A549 (cell line): ENCODE measurements at regions of chr16 and their contacts with region 1.

Region 1: GRCh38 chr16:9159839-9160550 is 68.6 kb downstream of the HAPSTR1 start:
- DNase-seq: peak; percentile 62 to 83
- ATAC-seq: peak; percentile 99
- H3K4me3 ChIP-seq: no peak overlapping the region
- H3K27ac ChIP-seq: no peak overlapping the region
- H3K4me1 ChIP-seq: no peaks in the 10 kb centered on the region
- CTCF ChIP-seq: peak; percentile 74
- EP300 ChIP-seq: no peak
- POLR2A ChIP-seq: no peak
- RAD21 ChIP-seq: peak; percentile 87 to 92

Region 2: GRCh38 chr16:9102379-9102778 is 57.6 kb before region 1 on chr16:
- CTCF ChIA-PET with region 1: no interaction called
- POLR2A ChIA-PET with region 1: no interaction called
- DNase-seq: peak in 1 of 2 experiments; percentile 37
- ATAC-seq: 0 out of 6 replicates have a peak, but pooled peaks of 1 of the 2 experiments have one; percentile 14
- H3K4me3 ChIP-seq: no peak overlapping the region
- H3K27ac ChIP-seq: no peak overlapping the region
- H3K4me1 ChIP-seq: peaks cover 59% of the 10 kb centered on the region
- CTCF ChIP-seq: no peak
- EP300 ChIP-seq: no peak
- POLR2A ChIP-seq: no peak
- RAD21 ChIP-seq: no peak

Region 3: GRCh38 chr16:9176547-9177418 is 16.8 kb after region 1 on chr16:
- CTCF ChIA-PET with region 1: interaction called, 14 read pairs
- POLR2A ChIA-PET with region 1: no interaction called
- DNase-seq: no peak
- ATAC-seq: no peak
- H3K4me3 ChIP-seq: no peak overlapping the region
- H3K27ac ChIP-seq: no peak overlapping the region
- H3K4me1 ChIP-seq: no peaks in the 10 kb centered on the region
- CTCF ChIP-seq: no peak
- EP300 ChIP-seq: no peak
- POLR2A ChIP-seq: no peak
- RAD21 ChIP-seq: no peak